Activated CD4-positive, alpha-beta T cell treated with anti-CD3 and anti-CD28 coated beads, Interleukin-2, amount 10 ng/mL, durations not matched to agents 24 days and 14 days (primary cell): ENCODE measurements at regions of chr1 and their contacts with region 1.

Region 1: GRCh38 chr1:212284744-212285684 is at the start of gene PPP2R5A:
- DNase-seq: peak; percentile 100
- H3K4me3 Mint-ChIP-seq: peak within 1 kb of the TSS; percentile 97
- H3K27ac Mint-ChIP-seq: peak within 1 kb of the TSS; percentile 99
- H3K4me1 Mint-ChIP-seq: peaks cover 30% of the 10 kb centered on the region
- H3K27me3 Mint-ChIP-seq: peaks cover 2% of the 10 kb centered on the region
- total RNA-seq, gene PPP2R5A: 43.6 and 44.4 TPM in 2 replicates

Region 2: DNA sequence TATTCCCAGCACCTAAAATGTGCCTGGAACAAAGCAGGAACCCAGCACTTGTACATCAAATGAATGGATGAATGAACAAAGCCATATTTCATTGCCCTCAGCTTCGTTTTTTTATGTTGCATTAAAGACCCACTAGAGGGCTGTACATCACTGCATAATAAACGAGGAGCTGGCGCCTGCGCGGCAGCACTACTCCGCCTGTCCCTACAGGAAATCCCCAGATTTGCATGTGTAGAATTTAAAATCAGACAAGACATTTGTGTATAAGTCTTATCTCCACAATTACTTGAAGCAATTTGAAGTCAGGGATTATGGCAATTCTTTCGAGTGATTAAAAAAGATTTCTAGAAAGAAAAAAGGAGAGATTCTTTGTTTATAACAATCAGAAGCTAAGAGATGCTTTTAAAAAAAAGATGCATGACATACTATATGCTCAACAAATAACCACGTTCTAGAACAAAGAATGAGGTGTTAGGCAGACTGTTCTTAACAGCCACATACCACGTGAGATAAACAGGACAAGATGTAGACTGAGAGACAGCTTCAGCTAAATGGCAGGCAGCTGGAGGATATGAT is 604.2 kb before region 1 on chr1:
- intact Hi-C with region 1: loop called (anchors 2 kb)
- DNase-seq: peak; percentile 91
- H3K4me3 Mint-ChIP-seq: peak overlapping the region; percentile 49
- H3K27ac Mint-ChIP-seq: peak overlapping the region; percentile 84
- H3K4me1 Mint-ChIP-seq: peaks cover 8% of the 10 kb centered on the region
- H3K27me3 Mint-ChIP-seq: peaks cover 7% of the 10 kb centered on the region

Region 3: GRCh38 chr1:211939876-211940468 is 345.0 kb before region 1 on chr1:
- intact Hi-C with region 1: loop called (anchors 5 kb)
- DNase-seq: peak; percentile 79
- H3K4me3 Mint-ChIP-seq: peak overlapping the region; percentile 26
- H3K27ac Mint-ChIP-seq: peak overlapping the region; percentile 34
- H3K4me1 Mint-ChIP-seq: peaks cover 35% of the 10 kb centered on the region
- H3K27me3 Mint-ChIP-seq: no peaks in the 10 kb centered on the region

Region 4: DNA sequence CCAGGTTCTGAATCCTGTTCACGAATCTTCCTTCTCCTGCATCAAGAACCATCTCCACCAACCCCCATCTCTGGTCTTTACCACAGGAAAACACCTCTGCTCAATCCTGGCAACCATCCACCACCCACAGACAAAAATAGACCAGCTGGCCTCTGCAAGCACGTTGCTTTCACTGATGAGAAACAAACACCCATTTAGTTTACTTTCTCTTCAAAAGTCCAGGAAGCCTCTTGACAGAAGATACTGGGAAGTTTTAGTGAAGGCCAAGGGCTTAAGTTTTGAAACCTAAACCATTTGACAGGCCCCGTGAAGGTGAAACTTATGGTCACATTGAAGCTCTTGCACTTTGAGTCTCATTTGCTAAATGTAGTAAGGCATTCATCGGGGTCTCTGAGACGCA is 122.4 kb before region 1 on chr1:
- intact Hi-C with region 1: loop called (anchors 1 kb)
- DNase-seq: peak; percentile 79
- H3K4me3 Mint-ChIP-seq: peak overlapping the region; percentile 47
- H3K27ac Mint-ChIP-seq: peak overlapping the region; percentile 72
- H3K4me1 Mint-ChIP-seq: peaks cover 37% of the 10 kb centered on the region
- H3K27me3 Mint-ChIP-seq: no peaks in the 10 kb centered on the region

Region 5: GRCh38 chr1:212234431-212235395 is 50.3 kb before region 1 on chr1:
- intact Hi-C with region 1: loop called (anchors 1 kb)
- DNase-seq: peak; percentile 74
- H3K4me3 Mint-ChIP-seq: peak overlapping the region; percentile 46
- H3K27ac Mint-ChIP-seq: peak overlapping the region; percentile 80
- H3K4me1 Mint-ChIP-seq: peaks cover 51% of the 10 kb centered on the region
- H3K27me3 Mint-ChIP-seq: no peaks in the 10 kb centered on the region

Region 6: DNA sequence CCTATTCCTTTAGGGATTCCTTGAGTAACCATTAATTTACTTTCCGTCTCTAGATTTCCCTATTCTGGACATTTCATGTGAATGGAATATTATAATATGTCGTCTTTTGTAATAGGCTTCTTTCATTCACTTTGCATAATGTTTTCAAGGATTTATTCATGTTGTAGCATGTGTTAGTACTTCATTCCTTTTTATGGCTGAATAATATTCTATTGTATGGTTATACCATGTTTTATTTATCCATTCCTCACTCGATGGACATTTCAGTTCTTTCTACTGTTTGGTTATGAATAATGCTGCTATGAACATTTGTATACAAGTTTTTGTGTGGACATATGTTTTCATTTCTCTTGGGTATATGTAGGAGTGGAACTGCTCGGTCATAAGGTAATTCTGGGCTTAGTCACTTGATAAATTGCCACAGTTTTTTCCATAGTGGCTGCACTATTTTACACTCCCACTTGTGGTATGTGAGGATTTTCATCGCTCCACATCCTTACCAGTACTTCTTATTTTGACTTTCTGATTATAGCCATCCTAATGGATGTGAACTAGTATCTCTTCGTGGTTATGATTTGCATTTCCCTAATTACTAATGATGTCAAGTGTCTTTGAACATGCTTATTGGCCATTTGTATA is 17.9 kb after region 1 on chr1:
- intact Hi-C with region 1: loop called (anchors 2 kb)
- DNase-seq: no peak
- H3K4me3 Mint-ChIP-seq: no peak overlapping the region
- H3K27ac Mint-ChIP-seq: peak overlapping the region; percentile 32
- H3K4me1 Mint-ChIP-seq: peaks cover 33% of the 10 kb centered on the region
- H3K27me3 Mint-ChIP-seq: no peaks in the 10 kb centered on the region

Region 7: DNA sequence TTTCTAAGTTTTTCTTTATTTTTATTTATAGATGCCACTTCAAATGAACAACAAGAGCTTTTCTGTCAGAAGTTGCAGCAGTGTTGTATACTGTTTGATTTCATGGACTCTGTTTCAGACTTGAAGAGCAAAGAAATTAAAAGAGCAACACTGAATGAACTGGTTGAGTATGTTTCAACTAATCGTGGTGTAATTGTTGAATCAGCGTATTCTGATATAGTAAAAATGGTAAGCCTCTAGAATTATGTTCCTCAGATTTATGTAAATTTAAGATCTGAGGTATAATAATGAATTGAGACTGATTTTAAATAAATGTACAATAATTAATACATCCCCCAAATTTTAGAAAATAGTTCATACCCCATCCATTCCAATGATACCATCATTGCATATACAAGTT is 44.1 kb after region 1 on chr1:
- intact Hi-C with region 1: no loop called
- DNase-seq: no peak
- H3K4me3 Mint-ChIP-seq: no peak overlapping the region
- H3K27ac Mint-ChIP-seq: no peak overlapping the region
- H3K4me1 Mint-ChIP-seq: no peaks in the 10 kb centered on the region
- H3K27me3 Mint-ChIP-seq: no peaks in the 10 kb centered on the region

Region 8: DNA sequence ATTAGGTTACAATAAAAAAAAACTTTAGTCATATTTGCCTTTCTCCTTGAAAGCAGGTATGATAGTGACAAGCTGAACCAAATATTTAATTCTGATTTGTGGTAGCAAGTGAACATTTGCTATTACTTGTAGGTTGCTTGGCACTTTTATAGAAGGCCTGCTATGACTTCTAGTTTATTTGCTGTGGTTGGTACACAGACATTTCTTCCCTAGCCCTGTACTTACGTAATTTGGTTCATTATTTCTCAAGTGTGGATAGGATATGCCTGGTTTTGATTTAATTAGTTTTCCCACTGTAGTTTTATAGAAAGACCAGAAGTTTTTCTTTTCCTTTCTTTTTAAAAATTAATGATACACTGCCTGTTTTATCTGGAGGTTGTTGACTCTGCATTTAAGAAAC is 56.1 kb after region 1 on chr1:
- intact Hi-C with region 1: no loop called
- DNase-seq: no peak
- H3K4me3 Mint-ChIP-seq: no peak overlapping the region
- H3K27ac Mint-ChIP-seq: no peak overlapping the region
- H3K4me1 Mint-ChIP-seq: no peaks in the 10 kb centered on the region
- H3K27me3 Mint-ChIP-seq: no peaks in the 10 kb centered on the region